ENCODE measurements at regions of chr2 and their contacts with region 1.

Region 1: DNA sequence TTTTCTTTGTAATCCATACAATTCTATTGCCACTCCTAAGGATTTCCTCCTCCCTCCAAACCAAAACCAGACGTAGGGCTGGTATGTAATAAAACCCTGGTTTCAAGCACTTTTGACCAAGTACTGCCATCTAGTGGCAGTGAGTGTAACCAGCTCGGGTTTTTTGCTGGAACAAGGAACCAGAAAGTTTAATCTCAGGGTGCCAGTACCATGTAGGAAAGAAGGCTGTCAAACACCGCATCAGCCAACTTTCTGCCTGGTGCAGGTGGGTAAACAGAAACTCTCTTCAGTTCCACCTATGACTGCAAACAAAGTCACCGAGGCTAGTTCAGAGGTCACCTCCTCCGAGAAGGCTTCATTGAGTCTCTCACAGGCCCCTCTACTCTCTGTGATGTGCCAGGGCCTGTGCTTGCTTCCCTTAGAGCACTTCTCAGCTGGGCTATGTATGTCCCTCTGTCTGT is 10.2 kb upstream of the THNSL2 start:
- DNase-seq: peak; percentile 73
- H3K4me3 Mint-ChIP-seq: no peak overlapping the region
- H3K27ac Mint-ChIP-seq: no peak overlapping the region
- H3K4me1 Mint-ChIP-seq: no peaks in the 10 kb centered on the region
- H3K27me3 Mint-ChIP-seq: peaks cover 4% of the 10 kb centered on the region

Region 2: DNA sequence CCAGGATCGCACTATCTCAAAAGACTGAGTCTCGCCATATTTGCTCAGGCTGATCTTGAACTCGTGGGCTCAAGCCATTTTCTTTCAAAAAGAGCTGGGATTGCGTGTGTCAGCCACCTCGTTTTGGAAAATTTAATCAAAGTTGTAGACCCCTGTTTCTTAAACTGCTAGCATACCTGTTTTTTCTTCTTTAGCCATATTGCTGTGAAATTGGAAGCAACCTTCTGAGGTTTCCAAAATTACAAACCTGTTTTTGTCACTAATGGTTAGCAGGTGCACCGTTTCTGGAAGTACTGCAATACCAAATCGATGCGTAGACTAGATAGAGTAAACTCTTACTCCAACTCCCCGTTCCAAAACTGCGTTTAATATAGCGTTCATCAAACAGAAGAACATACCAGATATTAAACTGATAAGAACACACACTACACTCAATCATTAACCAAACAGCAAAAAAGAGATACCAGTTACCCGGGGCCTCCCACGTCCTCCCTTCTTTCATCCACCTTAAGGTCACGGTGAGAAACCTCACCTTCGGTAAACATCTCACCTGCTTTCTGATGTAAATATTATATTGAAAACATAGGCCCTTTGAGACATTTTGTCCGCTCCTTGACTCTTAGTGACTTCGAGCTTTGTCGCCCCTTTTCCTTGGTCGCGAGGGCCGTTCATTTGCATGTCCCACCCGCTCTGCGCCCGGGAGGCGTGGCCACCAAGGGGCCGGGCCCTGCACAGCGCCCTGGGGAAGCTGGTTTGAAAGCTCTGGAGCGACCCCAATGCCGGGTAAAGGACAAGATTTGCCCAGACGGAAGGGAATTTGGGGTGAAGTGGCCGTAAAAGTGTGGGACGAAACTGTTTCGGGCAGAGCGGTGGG is 143.7 kb before region 1 on chr2 and contains the start of gene RNU2-63P:
- CTCF ChIA-PET with region 1: no interaction called
- POLR2A ChIA-PET with region 1: no interaction called
- DNase-seq: peak; percentile 76
- H3K4me3 Mint-ChIP-seq: peak within 1 kb of the TSS; percentile 96
- H3K27ac Mint-ChIP-seq: peak within 1 kb of the TSS; percentile 99
- H3K4me1 Mint-ChIP-seq: peaks cover 22% of the 10 kb centered on the region
- H3K27me3 Mint-ChIP-seq: no peaks in the 10 kb centered on the region
- total RNA-seq, gene RNU2-63P: 1.9 TPM

Region 3: GRCh38 chr2:88059979-88060906 is 99.7 kb before region 1 on chr2:
- CTCF ChIA-PET with region 1: interaction called, 17 read pairs
- POLR2A ChIA-PET with region 1: no interaction called
- DNase-seq: peak; percentile 34
- H3K4me3 Mint-ChIP-seq: no peak overlapping the region
- H3K27ac Mint-ChIP-seq: no peak overlapping the region
- H3K4me1 Mint-ChIP-seq: peaks cover 30% of the 10 kb centered on the region
- H3K27me3 Mint-ChIP-seq: no peaks in the 10 kb centered on the region